Left lung (tissue), 14 donors: ENCODE measurements at regions of chr19 and their contacts with region 1.

Region 1: GRCh38 chr19:52139252-52140031 is at the start of gene ZNF616:
- DNase-seq: peak; percentile 91 to 98 (median 97)
- ATAC-seq: peak; percentile 97
- H3K4me3 ChIP-seq: peak within 1 kb of the TSS; percentile 72 to 94
- H3K27ac ChIP-seq: peak within 1 kb of the TSS; percentile 94 to 96
- H3K4me1 ChIP-seq: peaks cover 3 to 24% of the 10 kb centered on the region in 2 donors
- H3K27me3 ChIP-seq: no peaks in the 10 kb centered on the region
- CTCF ChIP-seq: peak; percentile 58 to 80
- polyA plus RNA-seq, gene ZNF616: 19.8 to 26.0 (median 23.7) TPM

Region 2: GRCh38 chr19:51651216-51651846 is 488.1 kb before region 1 on chr19:
- intact Hi-C with region 1: no loop called
- DNase-seq: peak in 1 of 4 donors; percentile 53
- ATAC-seq: peak; percentile 83
- H3K4me3 ChIP-seq: no peak overlapping the region
- H3K27ac ChIP-seq: peak overlapping the region in 1 of 2 donors; percentile 76
- H3K4me1 ChIP-seq: peaks cover 0 to 47% of the 10 kb centered on the region in 2 donors
- H3K27me3 ChIP-seq: peaks cover 0 to 25% of the 10 kb centered on the region in 2 donors
- CTCF ChIP-seq: no peak

Region 3: DNA sequence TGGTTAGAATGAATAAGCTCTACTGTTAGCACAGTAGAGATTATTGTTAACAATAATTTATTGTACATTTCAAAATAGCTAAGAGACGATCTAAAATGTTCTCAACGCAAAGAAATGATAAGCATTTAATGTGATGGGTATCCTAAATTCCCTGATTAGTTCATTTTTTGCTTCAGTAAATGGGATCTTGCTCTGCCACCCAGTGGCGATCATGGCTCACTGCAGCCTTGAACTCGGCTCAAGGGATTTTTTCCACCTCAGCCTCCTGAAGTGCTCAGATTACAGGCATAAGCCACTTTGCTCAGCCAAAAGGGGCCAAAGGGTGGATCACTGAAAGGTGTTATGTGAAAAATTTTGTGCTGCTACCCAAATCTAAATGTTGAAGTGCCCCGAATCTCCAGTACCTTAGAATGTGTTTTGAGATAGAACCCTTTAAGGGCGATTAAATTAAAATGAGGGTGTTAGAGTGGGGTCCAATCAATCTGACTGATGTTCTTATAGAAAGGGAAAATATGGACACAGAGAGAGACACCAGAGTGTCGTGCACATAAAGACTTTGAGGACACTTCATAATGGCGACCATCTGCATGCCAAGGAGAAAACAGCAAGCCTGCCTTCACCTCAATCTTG is 98.4 kb after region 1 on chr19:
- intact Hi-C with region 1: loop called in 1 of 2 experiments (anchors 5 kb)
- DNase-seq: peak in 3 of 4 donors; percentile 49 to 78 (median 58)
- ATAC-seq: peak; percentile 97
- H3K4me3 ChIP-seq: no peak overlapping the region
- H3K27ac ChIP-seq: no peak overlapping the region
- H3K4me1 ChIP-seq: peaks cover 0 to 4% of the 10 kb centered on the region in 2 donors
- H3K27me3 ChIP-seq: no peaks in the 10 kb centered on the region
- CTCF ChIP-seq: peak; percentile 88 to 93